Heart left ventricle (tissue), 16 donors: ENCODE measurements at regions of chr12 and their contacts with region 1.

Region 1: GRCh38 chr12:69570545-69571399 is 14.5 kb upstream of the CCT2 start:
- DNase-seq: peak in 4 of 5 donors; percentile 18 to 37 (median 34)
- ATAC-seq: peak in 2 of 4 donors; percentile 77 to 80
- H3K4me3 ChIP-seq: no peak overlapping the region
- H3K27ac ChIP-seq: no peak overlapping the region
- H3K4me1 ChIP-seq: peaks cover 0 to 5% (median 0%) of the 10 kb centered on the region in 12 donors
- H3K27me3 ChIP-seq: no peaks in the 10 kb centered on the region
- CTCF ChIP-seq: peak; percentile 70 to 87 (median 78)
- POLR2A ChIP-seq: no peak

Region 2: DNA sequence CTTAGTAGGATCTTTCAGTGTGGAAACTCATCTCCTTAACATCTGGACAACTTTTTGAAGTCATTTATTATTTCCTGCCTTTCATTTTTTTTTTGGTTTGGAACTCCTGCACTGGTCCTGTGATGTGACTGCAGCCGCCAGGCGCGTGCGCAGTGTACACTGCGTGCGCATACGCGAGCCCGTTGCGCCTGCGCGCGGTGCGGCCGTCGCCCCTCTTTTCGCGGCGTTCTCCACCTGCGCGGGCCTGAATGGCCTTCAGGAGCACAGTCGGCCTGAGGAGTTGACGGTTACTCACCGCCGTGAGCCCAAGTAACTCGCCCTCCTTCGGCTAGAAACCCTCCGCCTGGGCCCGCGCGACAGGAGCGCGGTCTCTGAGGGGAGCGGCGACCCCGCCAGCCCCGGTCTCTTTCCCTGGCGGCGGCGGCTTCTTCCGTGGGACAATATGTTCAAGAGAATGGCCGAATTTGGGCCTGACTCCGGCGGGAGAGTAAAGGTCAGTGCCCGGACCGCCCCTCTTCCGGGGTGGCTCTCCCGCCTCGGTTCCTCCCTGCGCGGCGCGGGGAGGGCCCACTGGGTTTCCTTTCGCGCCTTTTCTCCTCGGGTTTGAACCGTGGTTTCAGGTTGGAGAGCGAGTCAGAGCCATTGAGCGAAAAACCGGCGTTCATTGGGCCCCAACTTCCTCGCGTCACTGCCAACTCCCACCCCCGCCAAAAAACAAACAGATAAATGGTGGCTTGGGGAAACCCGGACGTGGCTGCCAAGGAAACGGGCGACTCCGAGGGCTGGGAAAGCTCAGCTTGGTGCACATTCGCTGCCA is 211.0 kb before region 1 on chr12 and contains the start of gene YEATS4:
- intact Hi-C with region 1: loop called in 5 of 10 experiments (anchors 1 to 10 kb)
- DNase-seq: peak; percentile 82 to 92 (median 86)
- ATAC-seq: peak; percentile 96 to 98 (median 98)
- H3K4me3 ChIP-seq: peak within 1 kb of the TSS; percentile 52 to 93 (median 80)
- H3K27ac ChIP-seq: peak within 1 kb of the TSS; percentile 83 to 99 (median 92)
- H3K4me1 ChIP-seq: peaks cover 0 to 25% (median 9%) of the 10 kb centered on the region in 12 donors
- H3K27me3 ChIP-seq: no peaks in the 10 kb centered on the region
- CTCF ChIP-seq: no peak
- POLR2A ChIP-seq: no peak
- total RNA-seq, gene YEATS4: 6.7 to 45.0 (median 9.9) TPM

Region 3: DNA sequence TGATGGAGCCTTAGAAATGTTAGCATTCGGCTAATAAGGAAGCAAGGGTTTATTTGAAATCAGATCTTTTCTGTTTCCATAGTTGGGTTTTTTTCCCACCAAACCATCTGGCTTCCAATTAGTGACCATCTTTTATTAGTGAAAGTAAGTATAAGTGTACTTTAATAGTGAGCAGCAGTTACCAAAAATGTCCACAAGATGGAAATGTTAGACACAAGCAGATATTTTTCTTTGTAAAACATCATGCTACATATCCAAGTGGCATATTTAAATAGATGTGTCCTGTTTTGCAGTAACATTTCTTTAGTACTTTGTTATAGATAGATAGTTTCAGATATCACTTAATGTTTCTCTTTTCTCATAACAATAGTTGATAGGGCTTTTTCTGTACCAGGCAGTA is 182.4 kb before region 1 on chr12:
- intact Hi-C with region 1: loop called in 7 of 10 experiments (anchors 5 to 10 kb)
- DNase-seq: no peak
- ATAC-seq: no peak
- H3K4me3 ChIP-seq: no peak overlapping the region
- H3K27ac ChIP-seq: no peak overlapping the region
- H3K4me1 ChIP-seq: no peaks in the 10 kb centered on the region
- H3K27me3 ChIP-seq: no peaks in the 10 kb centered on the region
- CTCF ChIP-seq: peak; percentile 37 to 70 (median 56)
- POLR2A ChIP-seq: no peak

Region 4: DNA sequence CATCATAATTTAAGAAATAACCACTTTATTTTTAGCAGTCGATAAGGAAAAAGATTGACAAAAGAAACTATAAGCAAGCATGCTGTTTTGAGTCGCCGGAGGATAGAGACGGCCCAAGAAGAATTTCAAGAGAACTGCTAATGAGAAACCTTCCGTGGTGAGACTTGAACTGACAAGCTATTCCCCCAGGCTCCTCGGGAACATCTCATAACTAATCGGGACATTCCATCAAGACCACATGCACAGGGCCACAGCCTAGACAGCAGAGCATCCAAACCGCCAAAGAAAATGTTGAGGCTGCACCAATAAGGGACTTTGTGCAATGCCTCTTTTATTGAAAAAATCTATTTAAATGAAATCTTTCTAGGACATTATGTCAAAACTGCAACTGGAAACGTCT is 160.2 kb before region 1 on chr12:
- intact Hi-C with region 1: loop called in 8 of 10 experiments (anchors 2 to 5 kb)
- DNase-seq: no peak
- ATAC-seq: no peak
- H3K4me3 ChIP-seq: no peak overlapping the region
- H3K27ac ChIP-seq: no peak overlapping the region
- H3K4me1 ChIP-seq: peaks cover 0 to 2% (median 0%) of the 10 kb centered on the region in 12 donors
- H3K27me3 ChIP-seq: no peaks in the 10 kb centered on the region
- CTCF ChIP-seq: no peak
- POLR2A ChIP-seq: no peak

Region 5: DNA sequence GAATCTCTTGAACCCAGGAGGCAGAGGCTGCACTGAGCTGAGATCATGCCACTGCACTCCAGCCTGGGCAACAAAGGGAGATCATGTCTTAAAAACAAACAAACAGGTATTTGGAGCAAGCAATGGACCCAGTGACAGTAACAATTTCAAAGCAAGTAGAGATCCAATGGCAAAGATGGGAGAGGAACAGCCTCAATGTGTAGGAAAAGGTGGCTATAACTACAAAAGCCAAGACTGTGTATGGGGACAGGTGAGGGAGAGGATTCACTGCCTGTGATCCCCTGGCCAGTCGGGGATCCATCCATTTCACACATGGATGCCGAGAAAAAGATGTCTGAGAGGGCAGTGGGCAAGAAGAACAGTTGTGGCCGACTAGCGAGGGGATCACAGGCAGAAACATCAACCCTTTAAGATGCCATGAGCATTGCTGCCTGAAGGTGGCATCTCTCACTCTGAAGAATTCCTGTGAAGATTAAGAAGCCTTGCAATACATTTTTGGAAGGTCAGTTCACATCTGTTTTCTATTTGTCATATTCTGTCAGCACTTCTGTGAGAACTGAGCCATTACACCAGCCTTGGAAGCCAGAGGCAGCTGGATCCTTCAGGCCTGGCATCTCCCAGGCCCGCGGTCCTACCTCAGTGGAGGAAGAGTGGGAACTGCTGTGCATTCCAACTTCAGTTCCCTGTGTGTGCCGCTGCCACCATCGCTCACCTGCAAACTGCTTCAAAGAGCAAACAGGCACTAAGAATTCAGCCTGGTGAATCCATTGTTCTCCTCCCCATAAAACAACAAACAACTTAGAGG is 155.1 kb before region 1 on chr12:
- intact Hi-C with region 1: loop called in 9 of 10 experiments (anchors 2 to 5 kb)
- DNase-seq: peak; percentile 29 to 60 (median 54)
- ATAC-seq: peak in 3 of 4 donors; percentile 81 to 94 (median 91)
- H3K4me3 ChIP-seq: peak overlapping the region in 3 of 12 donors; percentile 2 to 23 (median 11)
- H3K27ac ChIP-seq: peak overlapping the region in 2 of 12 donors; percentile 22 to 41
- H3K4me1 ChIP-seq: peaks cover 0 to 11% (median 3%) of the 10 kb centered on the region in 12 donors
- H3K27me3 ChIP-seq: no peaks in the 10 kb centered on the region
- CTCF ChIP-seq: peak; percentile 42 to 82 (median 66)
- POLR2A ChIP-seq: no peak

Region 6: DNA sequence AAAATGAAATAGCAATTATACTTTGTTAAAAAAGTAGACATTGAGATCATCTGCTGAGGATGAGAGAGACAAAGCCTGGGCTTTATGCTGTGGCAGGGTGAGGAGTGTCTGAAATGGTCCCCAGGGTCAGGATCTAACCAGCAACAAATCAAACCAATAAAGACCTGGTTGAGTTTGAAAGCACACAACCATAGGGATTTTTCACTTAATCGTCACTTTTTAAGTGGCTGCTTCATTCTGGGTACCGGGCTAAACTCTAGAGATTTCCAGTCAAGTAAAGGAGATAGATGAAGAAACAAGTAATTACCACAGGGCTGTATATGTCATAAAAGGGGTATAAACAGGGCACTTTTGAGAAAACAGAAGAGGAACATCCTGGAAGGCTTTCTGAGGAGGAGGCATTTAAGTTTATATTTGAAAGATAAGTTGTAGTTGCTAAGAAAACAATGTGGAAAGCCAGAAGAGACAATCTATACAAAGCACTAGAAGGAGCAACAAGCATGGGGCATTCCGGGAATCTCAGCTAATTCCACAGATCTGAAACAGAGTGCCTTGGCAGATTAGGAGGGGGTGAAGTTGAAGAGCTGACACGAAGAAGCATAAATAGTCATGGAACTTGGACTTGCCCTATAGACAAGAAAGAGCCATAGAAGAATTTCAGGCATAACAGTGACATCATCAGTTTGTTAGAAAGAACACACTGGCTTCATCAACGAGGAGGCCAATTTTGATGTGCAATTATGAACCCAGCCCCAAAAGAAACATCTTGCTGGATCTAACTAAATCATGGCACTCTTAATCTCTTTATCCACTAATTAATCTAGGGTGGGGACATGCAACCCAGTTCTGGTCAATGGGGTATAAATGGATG is 147.5 kb before region 1 on chr12:
- intact Hi-C with region 1: loop called in 7 of 10 experiments (anchors 5 kb)
- DNase-seq: no peak
- ATAC-seq: no peak
- H3K4me3 ChIP-seq: no peak overlapping the region
- H3K27ac ChIP-seq: no peak overlapping the region
- H3K4me1 ChIP-seq: no peaks in the 10 kb centered on the region
- H3K27me3 ChIP-seq: no peaks in the 10 kb centered on the region
- CTCF ChIP-seq: no peak
- POLR2A ChIP-seq: no peak